Heart right ventricle (tissue), 16 donors: ENCODE measurements at regions of chr4 and their contacts with region 1.

Region 1: GRCh38 chr4:112231779-112232713 is at the start of gene AP1AR:
- DNase-seq: peak; percentile 83 to 84
- ATAC-seq: peak; percentile 82 to 92 (median 83)
- H3K4me3 ChIP-seq: peak within 1 kb of the TSS; percentile 80 to 97 (median 92)
- H3K27ac ChIP-seq: peak within 1 kb of the TSS; percentile 79 to 97 (median 94)
- H3K4me1 ChIP-seq: peaks cover 0 to 37% (median 20%) of the 10 kb centered on the region in 9 donors
- H3K27me3 ChIP-seq: no peaks in the 10 kb centered on the region
- CTCF ChIP-seq: peak in 7 of 9 donors; percentile 20 to 58 (median 33)
- total RNA-seq, gene AP1AR: 7.6 to 13.4 (median 11.4) TPM

Region 2: GRCh38 chr4:112099701-112100297 is 132.2 kb before region 1 on chr4:
- intact Hi-C with region 1: loop called (anchors 1 to 5 kb)
- DNase-seq: no peak
- ATAC-seq: peak in 6 of 8 donors; percentile 75 to 88 (median 79)
- H3K4me3 ChIP-seq: no peak overlapping the region
- H3K27ac ChIP-seq: no peak overlapping the region
- H3K4me1 ChIP-seq: peaks cover 0 to 19% (median 7%) of the 10 kb centered on the region in 9 donors
- H3K27me3 ChIP-seq: no peaks in the 10 kb centered on the region
- CTCF ChIP-seq: peak; percentile 44 to 84 (median 75)

Region 3: GRCh38 chr4:112714922-112715901 is 483.2 kb after region 1 on chr4:
- intact Hi-C with region 1: no loop called
- DNase-seq: no peak
- ATAC-seq: peak in 7 of 8 donors; percentile 16 to 93 (median 72)
- H3K4me3 ChIP-seq: no peak overlapping the region
- H3K27ac ChIP-seq: peak overlapping the region in 9 of 10 donors; percentile 22 to 78 (median 64)
- H3K4me1 ChIP-seq: peaks cover 0 to 24% (median 6%) of the 10 kb centered on the region in 9 donors
- H3K27me3 ChIP-seq: peaks cover 0 to 2% (median 0%) of the 10 kb centered on the region in 7 donors
- CTCF ChIP-seq: no peak